Activated T-helper 1 cell treated with anti-CD3 and anti-CD28 coated beads, Interleukin-12 subunit alpha, Interleukin-12 subunit beta, Interleukin-2, Interleukin-4 antibody, amounts not matched to agents 30 ng/mL and 10 ng/mL and 1 ng/mL, durations not matched to agents 14 hours and 24 hours and 36 hours (primary cell): ENCODE measurements at regions of chr3 and their contacts with region 1.

Region 1: GRCh38 chr3:46976326-46977190 is at the start of gene CCDC12:
- DNase-seq: peak; percentile 93
- H3K4me3 Mint-ChIP-seq: peak within 1 kb of the TSS; percentile 97
- H3K27ac Mint-ChIP-seq: peak within 1 kb of the TSS; percentile 100
- H3K4me1 Mint-ChIP-seq: peaks cover 52% of the 10 kb centered on the region
- H3K27me3 Mint-ChIP-seq: no peaks in the 10 kb centered on the region
- total RNA-seq, gene CCDC12: 68.7 and 69.1 TPM in 2 replicates

Region 2: GRCh38 chr3:45688882-45689756 is 1287.4 kb before region 1 on chr3 and contains the start of gene SACM1L:
- intact Hi-C with region 1: loop called (anchors 10 kb)
- DNase-seq: peak; percentile 96
- H3K4me3 Mint-ChIP-seq: peak within 1 kb of the TSS; percentile 95
- H3K27ac Mint-ChIP-seq: peak within 1 kb of the TSS; percentile 100
- H3K4me1 Mint-ChIP-seq: peaks cover 59% of the 10 kb centered on the region
- H3K27me3 Mint-ChIP-seq: peaks cover 4% of the 10 kb centered on the region
- total RNA-seq, gene SACM1L: 112 and 114 TPM in 2 replicates

Region 3: GRCh38 chr3:46935168-46935858 is 41.2 kb before region 1 on chr3:
- intact Hi-C with region 1: no loop called
- DNase-seq: no peak
- H3K4me3 Mint-ChIP-seq: no peak overlapping the region
- H3K27ac Mint-ChIP-seq: peak overlapping the region; percentile 68
- H3K4me1 Mint-ChIP-seq: peaks cover 67% of the 10 kb centered on the region
- H3K27me3 Mint-ChIP-seq: no peaks in the 10 kb centered on the region

Region 4: DNA sequence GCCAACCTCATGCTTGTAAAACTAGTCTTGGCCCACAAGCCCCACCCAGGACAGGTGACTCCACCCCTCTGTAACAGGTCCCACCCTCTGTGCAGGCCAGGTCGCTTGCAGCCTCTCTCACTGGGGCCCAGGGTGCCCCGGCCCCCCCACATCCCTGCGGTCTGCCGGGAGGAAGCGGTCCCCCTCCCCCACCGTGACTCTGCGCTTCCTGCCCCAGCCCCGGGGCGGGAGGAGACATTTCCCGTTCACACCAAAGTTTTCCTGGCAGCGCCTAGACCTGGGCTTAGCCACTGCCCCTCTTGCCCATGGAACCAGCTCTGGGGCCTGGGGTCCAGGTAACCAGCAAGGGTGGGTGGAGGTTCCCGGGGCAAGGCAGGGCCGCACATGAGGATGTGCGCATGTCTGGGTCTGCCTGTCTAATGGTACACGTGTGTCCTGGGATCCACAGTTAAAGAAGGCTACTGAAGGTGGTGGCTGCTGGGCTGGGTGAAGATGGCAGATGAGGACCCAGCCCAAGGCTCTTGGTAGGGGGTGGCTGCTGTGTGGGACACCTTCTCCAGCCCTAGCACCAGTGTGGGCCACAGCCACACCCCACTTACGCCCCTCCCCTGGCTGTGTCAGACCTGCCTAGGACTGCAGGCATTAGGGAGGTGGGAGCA is 11.3 kb after region 1 on chr3:
- intact Hi-C with region 1: loop called (anchors 1 kb)
- DNase-seq: peak; percentile 91
- H3K4me3 Mint-ChIP-seq: peak overlapping the region; percentile 83
- H3K27ac Mint-ChIP-seq: peak overlapping the region; percentile 94
- H3K4me1 Mint-ChIP-seq: peaks cover 79% of the 10 kb centered on the region
- H3K27me3 Mint-ChIP-seq: no peaks in the 10 kb centered on the region

Region 5: DNA sequence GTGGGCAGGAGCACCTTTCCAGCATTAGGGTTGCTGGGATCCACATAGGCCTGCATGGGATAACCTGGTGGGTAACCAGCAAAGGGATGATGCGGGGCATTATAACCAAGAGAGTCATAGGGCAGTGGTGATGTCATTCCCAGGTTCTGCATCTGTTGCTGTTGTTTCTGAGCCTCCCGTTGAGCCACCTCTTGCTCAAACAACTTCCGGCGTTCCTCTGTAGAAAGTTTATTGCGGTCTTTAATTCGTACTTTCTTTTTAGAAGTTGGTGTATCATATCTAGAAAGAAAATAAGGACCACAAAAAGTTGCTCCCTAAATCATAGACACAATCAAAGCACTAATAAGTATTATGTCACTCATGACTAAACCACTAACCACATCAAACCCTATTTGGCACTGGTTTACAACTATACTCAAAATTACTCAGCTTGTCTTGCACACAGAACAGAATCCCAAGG is 80.7 kb after region 1 on chr3:
- intact Hi-C with region 1: loop called (anchors 1 kb)
- DNase-seq: peak; percentile 37
- H3K4me3 Mint-ChIP-seq: no peak overlapping the region
- H3K27ac Mint-ChIP-seq: peak overlapping the region; percentile 55
- H3K4me1 Mint-ChIP-seq: peaks cover 41% of the 10 kb centered on the region
- H3K27me3 Mint-ChIP-seq: no peaks in the 10 kb centered on the region

Region 6: DNA sequence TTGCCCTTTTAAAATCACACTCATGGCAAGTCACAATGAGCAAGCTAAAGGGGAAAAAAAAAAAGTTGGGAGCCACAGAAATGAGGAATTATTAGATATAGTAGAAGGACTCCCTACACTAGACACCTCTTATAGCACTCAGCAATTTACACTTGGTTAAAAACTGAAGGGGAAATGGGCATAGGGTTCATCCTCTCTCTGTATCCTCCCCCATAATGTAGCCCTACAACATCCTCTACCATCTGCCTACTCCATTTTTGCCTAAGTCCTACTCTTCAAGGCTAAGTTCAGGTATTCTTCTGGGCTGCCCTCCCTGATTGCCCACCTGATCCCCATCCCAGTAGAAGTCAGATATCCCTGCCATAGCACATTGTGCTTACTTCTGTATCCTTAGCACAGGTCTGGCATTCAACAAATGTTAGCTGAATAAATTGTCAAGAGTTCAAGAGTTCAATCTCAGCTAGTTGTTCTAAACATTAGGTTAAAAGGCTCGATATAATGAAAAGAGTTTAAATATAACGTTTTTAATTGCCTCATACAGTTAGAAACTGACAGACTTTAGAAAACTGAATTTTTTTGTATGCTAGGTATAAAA is 172.9 kb after region 1 on chr3:
- intact Hi-C with region 1: no loop called
- DNase-seq: no peak
- H3K4me3 Mint-ChIP-seq: no peak overlapping the region
- H3K27ac Mint-ChIP-seq: no peak overlapping the region
- H3K4me1 Mint-ChIP-seq: peaks cover 29% of the 10 kb centered on the region
- H3K27me3 Mint-ChIP-seq: no peaks in the 10 kb centered on the region

Region 7: DNA sequence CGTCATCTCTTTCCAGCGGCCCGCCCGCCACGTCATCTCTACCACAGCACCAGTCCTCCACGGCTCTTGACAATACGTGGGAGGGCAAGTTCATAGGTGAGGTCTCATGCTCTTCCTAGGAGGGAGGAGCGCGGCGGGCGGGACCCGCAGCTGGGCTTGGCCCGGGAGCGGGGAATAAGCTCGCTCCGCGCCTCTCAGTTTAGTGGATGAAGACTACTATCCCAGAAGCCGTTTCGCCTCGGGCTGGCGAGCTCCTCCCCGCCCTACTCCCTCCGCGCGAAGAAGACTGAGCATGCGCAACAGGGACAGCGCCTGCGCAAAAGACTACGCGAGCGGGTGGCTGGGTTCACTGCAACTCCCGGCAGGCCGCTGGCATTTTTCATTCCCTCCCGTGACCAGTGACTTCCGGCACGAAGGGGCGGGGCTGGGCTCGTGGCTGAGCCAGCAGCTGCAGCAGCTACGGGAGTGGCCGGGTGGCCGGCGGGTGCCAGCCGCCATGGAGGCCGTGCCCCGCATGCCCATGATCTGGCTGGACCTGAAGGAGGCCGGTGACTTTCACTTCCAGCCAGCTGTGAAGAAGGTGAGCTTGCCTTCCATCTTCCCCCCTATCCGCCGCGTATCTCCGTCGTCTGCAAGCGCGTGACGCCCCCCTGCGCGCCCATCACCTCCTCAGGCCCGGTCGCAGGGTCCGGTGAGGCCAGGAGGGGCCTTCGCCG is 404.2 kb after region 1 on chr3 and contains the start of gene PTPN23:
- intact Hi-C with region 1: loop called (anchors 1 kb)
- DNase-seq: peak; percentile 99
- H3K4me3 Mint-ChIP-seq: peak within 1 kb of the TSS; percentile 100
- H3K27ac Mint-ChIP-seq: peak within 1 kb of the TSS; percentile 100
- H3K4me1 Mint-ChIP-seq: peaks cover 43% of the 10 kb centered on the region
- H3K27me3 Mint-ChIP-seq: no peaks in the 10 kb centered on the region
- total RNA-seq, gene PTPN23: 33.7 and 35.1 TPM in 2 replicates

Region 8: DNA sequence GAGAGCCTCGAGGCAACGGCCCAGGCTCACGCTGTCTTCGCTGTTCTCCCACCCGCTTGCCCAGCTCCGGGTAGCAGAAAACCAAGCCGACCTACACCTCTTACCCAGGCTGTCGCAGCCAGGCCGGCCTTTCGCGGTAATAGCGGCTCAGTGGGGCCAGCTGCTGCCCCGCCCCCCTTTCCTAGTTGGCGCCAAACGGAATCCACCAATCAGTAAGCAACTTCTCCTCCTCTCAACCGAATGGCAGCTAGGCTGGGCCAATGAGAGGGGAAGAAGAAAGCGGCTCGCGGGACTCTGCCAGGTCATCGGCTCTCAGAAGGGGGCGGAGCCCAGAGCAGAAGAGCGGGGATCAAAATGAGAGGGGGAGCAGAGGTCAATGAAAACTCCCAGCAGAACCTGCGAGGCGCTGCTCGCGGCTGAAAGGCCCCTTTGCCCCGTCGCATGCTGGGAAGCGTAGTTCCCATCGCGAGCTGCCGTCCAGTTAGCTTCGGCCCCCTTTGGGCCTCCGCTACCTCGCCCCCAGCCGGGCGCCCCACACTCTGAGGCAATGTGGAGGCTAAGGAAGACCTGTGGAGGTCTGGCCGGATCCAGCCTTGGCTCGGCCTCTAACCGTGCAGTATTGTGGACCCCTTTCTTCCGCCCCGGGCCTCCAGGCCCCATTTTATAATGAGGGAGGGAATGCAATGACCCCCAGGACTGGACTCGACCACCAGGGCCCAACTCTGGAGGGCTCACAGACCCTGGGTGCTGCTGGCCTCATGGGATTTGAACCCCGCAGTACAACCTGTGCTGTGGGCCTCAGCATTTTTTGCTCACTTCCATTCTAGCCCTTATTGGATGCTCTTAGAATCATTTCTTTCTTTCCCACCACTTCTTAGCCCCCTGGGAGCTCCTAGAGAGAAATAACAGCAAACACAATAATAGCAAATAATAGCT is 1212.0 kb after region 1 on chr3 and contains the start of gene CDC25A:
- intact Hi-C with region 1: loop called (anchors 2 kb)
- DNase-seq: peak; percentile 95
- H3K4me3 Mint-ChIP-seq: peak within 1 kb of the TSS; percentile 96
- H3K27ac Mint-ChIP-seq: peak within 1 kb of the TSS; percentile 92
- H3K4me1 Mint-ChIP-seq: peaks cover 35% of the 10 kb centered on the region
- H3K27me3 Mint-ChIP-seq: peaks cover 6% of the 10 kb centered on the region
- total RNA-seq, gene CDC25A: 50.9 and 52.6 TPM in 2 replicates